Naive thymus-derived CD4-positive, alpha-beta T cell (primary cell): ENCODE measurements at regions of chrX and their contacts with region 1.

Region 1: GRCh38 chrX:17046478-17047097 is 100.1 kb downstream of the REPS2 start:
- DNase-seq: peak in 8 of 9 donors; percentile 8 to 34 (median 18)
- ATAC-seq: peak; percentile 72
- H3K4me3 ChIP-seq: no peak overlapping the region
- H3K4me3 Mint-ChIP-seq: no peak overlapping the region
- H3K27ac ChIP-seq: no peak overlapping the region
- H3K27ac Mint-ChIP-seq: peak overlapping the region in 1 of 9 donors; percentile 29
- H3K4me1 ChIP-seq: no peaks in the 10 kb centered on the region
- H3K4me1 Mint-ChIP-seq: peaks cover 0 to 3% (median 0%) of the 10 kb centered on the region in 7 donors
- H3K27me3 ChIP-seq: no peaks in the 10 kb centered on the region
- H3K27me3 Mint-ChIP-seq: peaks cover 0 to 3% (median 0%) of the 10 kb centered on the region in 5 donors

Region 2: DNA sequence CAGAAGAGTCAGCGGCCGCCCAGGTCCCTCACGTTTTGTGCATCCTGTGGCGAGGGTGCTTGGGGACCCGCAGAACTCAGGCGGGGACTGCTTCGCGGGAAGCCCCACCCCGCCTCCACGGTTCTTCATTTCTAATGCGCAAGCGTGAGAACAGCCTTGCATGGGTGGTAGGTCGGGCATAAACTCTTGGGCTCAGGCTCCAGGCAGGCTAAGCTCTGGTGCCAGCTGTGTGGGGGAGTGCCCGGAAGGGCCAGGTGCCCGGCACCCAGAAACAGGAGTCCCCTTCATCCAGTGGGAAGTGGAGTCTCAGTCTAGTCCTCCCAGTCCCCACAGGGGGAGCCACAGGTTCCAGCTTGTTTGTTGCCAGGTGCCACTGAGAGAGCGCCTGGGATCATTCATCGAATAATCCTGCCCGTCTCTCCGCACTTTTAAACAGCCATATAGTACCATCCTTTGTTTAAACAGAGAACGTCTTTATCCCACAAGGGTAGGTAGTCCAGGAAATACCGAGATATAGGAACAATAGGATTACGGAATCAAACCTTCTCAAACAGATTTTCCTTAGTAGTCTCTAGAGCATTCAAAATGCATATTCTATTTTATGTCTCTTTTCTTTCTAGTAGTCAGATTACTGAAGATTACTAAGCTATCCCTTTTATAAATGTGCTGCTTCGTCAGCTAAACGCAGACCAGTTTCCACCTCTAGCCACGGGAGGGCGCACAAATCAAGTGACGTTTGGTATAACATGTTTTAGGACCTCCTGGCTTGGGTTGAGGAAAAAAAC is 163.7 kb before region 1 on chrX:
- CTCF ChIA-PET with region 1: interaction called, 14 read pairs
- POLR2A ChIA-PET with region 1: no interaction called
- intact Hi-C with region 1: loop called (anchors 1 kb)
- DNase-seq: peak; percentile 32 to 64 (median 57)
- ATAC-seq: peak; percentile 86
- H3K4me3 ChIP-seq: peak overlapping the region; percentile 74
- H3K4me3 Mint-ChIP-seq: peak overlapping the region; percentile 73 to 82 (median 78)
- H3K27ac ChIP-seq: peak overlapping the region; percentile 60
- H3K27ac Mint-ChIP-seq: peak overlapping the region in 7 of 9 donors; percentile 31 to 88 (median 67)
- H3K4me1 ChIP-seq: no peaks in the 10 kb centered on the region
- H3K4me1 Mint-ChIP-seq: peaks cover 0 to 10% (median 4%) of the 10 kb centered on the region in 7 donors
- H3K27me3 ChIP-seq: no peaks in the 10 kb centered on the region
- H3K27me3 Mint-ChIP-seq: peaks cover 0 to 12% (median 0%) of the 10 kb centered on the region in 5 donors

Region 3: DNA sequence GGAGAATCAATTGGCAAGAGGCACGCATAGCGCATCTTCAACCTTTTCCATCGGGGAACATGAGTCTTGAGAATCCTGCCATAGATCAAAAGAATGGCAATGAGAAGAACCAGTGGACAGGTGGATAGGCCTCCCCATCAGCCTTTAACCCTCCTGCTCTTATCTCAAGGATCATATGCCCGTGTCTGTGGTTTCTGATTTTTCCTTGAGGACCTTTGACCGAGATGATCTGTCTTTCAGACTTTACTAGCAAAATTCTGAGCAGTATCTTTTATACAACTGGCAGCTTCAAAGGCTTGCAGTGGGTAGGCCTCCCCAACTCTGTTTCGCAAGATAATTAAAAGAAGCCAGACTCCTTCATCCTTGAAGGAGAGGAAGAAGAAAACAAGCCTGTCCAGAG is 74.2 kb after region 1 on chrX:
- CTCF ChIA-PET with region 1: no interaction called
- POLR2A ChIA-PET with region 1: no interaction called
- intact Hi-C with region 1: no loop called
- DNase-seq: no peak
- ATAC-seq: no peak
- H3K4me3 ChIP-seq: no peak overlapping the region
- H3K4me3 Mint-ChIP-seq: no peak overlapping the region
- H3K27ac ChIP-seq: no peak overlapping the region
- H3K27ac Mint-ChIP-seq: no peak overlapping the region
- H3K4me1 ChIP-seq: no peaks in the 10 kb centered on the region
- H3K4me1 Mint-ChIP-seq: peaks cover 0 to 2% (median 0%) of the 10 kb centered on the region in 7 donors
- H3K27me3 ChIP-seq: no peaks in the 10 kb centered on the region
- H3K27me3 Mint-ChIP-seq: no peaks in the 10 kb centered on the region